GM12878 (cell line): ENCODE measurements at regions of chr17 and their contacts with region 1.

Region 1: GRCh38 chr17:4152471-4152870 is 9.5 kb downstream of the CYB5D2 start:
- DNase-seq: no peak
- ATAC-seq: no peak
- H3K4me3 ChIP-seq: no peak overlapping the region
- H3K27ac ChIP-seq: no peak overlapping the region
- H3K4me1 ChIP-seq: no peaks in the 10 kb centered on the region
- H3K27me3 ChIP-seq: no peaks in the 10 kb centered on the region
- CTCF ChIP-seq: no peak
- EP300 ChIP-seq: no peak
- POLR2A ChIP-seq: no peak
- RAD21 ChIP-seq: no peak

Region 2: GRCh38 chr17:4125552-4125951 is 26.9 kb before region 1 on chr17:
- CTCF ChIA-PET with region 1: no interaction called
- POLR2A ChIA-PET with region 1: interaction called, 11 read pairs
- RAD21 ChIA-PET with region 1: interaction called, 4 read pairs
- SMC1A ChIA-PET with region 1: no interaction called
- in situ Hi-C with region 1: no loop called
- intact Hi-C with region 1: no loop called
- DNase-seq: no peak
- ATAC-seq: no peak
- H3K4me3 ChIP-seq: no peak overlapping the region
- H3K27ac ChIP-seq: no peak overlapping the region
- H3K4me1 ChIP-seq: peaks cover 15% of the 10 kb centered on the region
- H3K27me3 ChIP-seq: no peaks in the 10 kb centered on the region
- CTCF ChIP-seq: no peak
- EP300 ChIP-seq: no peak
- POLR2A ChIP-seq: no peak
- RAD21 ChIP-seq: no peak

Region 3: DNA sequence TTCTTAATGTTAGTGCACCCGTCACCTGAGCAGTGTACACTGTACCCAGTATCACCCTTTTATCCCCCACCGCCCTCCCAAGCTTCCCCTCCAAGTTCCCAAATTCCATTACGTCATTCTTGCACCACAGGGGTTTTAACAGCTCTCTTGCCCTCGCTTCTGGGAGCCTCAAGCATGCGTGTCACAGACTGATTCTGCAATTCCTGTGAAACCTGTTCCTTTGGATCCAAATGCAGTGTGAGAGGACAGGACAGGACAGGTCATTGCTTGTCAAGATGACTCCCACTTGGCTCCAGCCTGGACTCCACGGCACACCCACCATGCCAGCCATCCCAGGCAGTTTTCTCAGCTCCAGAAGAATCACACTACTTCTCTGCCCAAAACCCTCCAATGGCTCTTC is 34.6 kb after region 1 on chr17:
- CTCF ChIA-PET with region 1: no interaction called
- POLR2A ChIA-PET with region 1: no interaction called
- RAD21 ChIA-PET with region 1: no interaction called
- SMC1A ChIA-PET with region 1: no interaction called
- in situ Hi-C with region 1: no loop called
- intact Hi-C with region 1: no loop called
- DNase-seq: no peak
- ATAC-seq: no peak
- H3K4me3 ChIP-seq: no peak overlapping the region
- H3K27ac ChIP-seq: no peak overlapping the region
- H3K4me1 ChIP-seq: no peaks in the 10 kb centered on the region
- H3K27me3 ChIP-seq: no peaks in the 10 kb centered on the region
- CTCF ChIP-seq: no peak
- EP300 ChIP-seq: no peak
- POLR2A ChIP-seq: no peak
- RAD21 ChIP-seq: no peak

Region 4: DNA sequence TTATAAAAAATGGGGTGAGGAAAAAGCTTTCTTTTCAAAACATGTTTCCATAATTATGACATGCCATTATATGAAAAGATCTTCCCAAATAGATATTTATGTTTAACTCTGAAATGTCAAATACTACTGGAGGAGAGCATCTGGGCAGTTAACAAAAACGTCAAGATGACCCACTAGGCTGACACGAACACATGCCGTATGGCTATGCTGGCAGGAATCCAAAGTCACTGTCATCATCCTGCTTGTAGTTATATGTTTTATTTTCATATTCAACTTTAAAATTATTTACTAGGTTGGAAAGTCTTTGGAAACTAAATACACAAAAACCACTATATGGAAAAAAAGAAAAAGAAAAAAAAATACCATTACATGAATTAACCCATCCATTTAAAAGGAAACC is 84.0 kb after region 1 on chr17:
- CTCF ChIA-PET with region 1: no interaction called
- POLR2A ChIA-PET with region 1: no interaction called
- RAD21 ChIA-PET with region 1: no interaction called
- SMC1A ChIA-PET with region 1: no interaction called
- in situ Hi-C with region 1: no loop called
- intact Hi-C with region 1: no loop called
- DNase-seq: no peak
- ATAC-seq: no peak
- H3K4me3 ChIP-seq: no peak overlapping the region
- H3K27ac ChIP-seq: no peak overlapping the region
- H3K4me1 ChIP-seq: no peaks in the 10 kb centered on the region
- H3K27me3 ChIP-seq: no peaks in the 10 kb centered on the region
- CTCF ChIP-seq: no peak
- EP300 ChIP-seq: no peak
- POLR2A ChIP-seq: no peak
- RAD21 ChIP-seq: no peak